Right lobe of liver (tissue), 6 donors: ENCODE measurements at regions of chr15 and their contacts with region 1.

Region 1: GRCh38 chr15:84826369-84826823 is 9.2 kb downstream of the ALPK3 start:
- DNase-seq: peak in 2 of 3 donors; percentile 53 to 69
- ATAC-seq: peak; percentile 53 to 68 (median 62)
- H3K4me3 ChIP-seq: no peak overlapping the region
- H3K27ac ChIP-seq: no peak overlapping the region
- H3K4me1 ChIP-seq: peaks cover 0 to 16% (median 8%) of the 10 kb centered on the region in 4 donors
- H3K27me3 ChIP-seq: no peaks in the 10 kb centered on the region
- CTCF ChIP-seq: peak; percentile 35 to 63 (median 54)
- POLR2A ChIP-seq: no peak

Region 2: GRCh38 chr15:84761607-84762131 is 64.7 kb before region 1 on chr15:
- intact Hi-C with region 1: no loop called
- DNase-seq: no peak
- ATAC-seq: no peak
- H3K4me3 ChIP-seq: no peak overlapping the region
- H3K27ac ChIP-seq: peak overlapping the region in 2 of 3 donors; percentile 86 to 87
- H3K4me1 ChIP-seq: peaks cover 0 to 78% (median 39%) of the 10 kb centered on the region in 4 donors
- H3K27me3 ChIP-seq: no peaks in the 10 kb centered on the region
- CTCF ChIP-seq: no peak
- POLR2A ChIP-seq: no peak

Region 3: DNA sequence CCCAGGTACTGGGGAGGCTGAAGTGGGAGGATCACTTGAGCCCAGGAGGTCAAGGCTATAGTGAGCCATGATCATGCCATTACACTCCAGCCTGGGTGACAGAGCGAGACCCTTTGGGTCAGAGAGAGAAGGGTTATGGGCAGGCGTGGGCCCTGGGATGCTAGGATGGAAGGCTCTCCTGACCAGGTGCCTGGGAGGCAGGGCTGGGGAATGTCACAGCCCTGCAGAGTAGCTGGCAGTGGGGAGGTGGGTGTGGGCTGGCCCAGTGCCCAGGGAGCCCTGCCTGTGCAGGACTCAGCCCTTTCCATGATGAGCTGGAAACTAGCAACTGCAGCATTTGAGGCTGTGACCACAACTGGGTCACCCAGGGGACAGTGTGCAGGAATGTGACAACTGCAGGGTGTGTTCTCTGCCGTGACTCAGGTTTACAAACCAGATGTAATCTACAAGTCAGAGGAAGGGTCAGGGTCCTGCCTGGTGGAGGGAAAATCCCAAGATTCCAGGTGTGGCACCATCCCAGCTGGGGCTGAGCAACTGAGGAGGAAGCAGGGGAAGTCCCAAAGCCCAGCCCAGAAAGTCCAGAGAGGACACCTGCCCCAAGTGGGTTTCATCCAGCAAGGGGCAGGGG is 103.5 kb after region 1 on chr15:
- intact Hi-C with region 1: loop called in 1 of 2 experiments (anchors 10 kb)
- DNase-seq: peak in 2 of 3 donors; percentile 62 to 80
- ATAC-seq: peak in 3 of 4 donors; percentile 14 to 73 (median 18)
- H3K4me3 ChIP-seq: no peak overlapping the region
- H3K27ac ChIP-seq: no peak overlapping the region
- H3K4me1 ChIP-seq: peaks cover 0 to 11% (median 3%) of the 10 kb centered on the region in 4 donors
- H3K27me3 ChIP-seq: no peaks in the 10 kb centered on the region
- CTCF ChIP-seq: no peak
- POLR2A ChIP-seq: no peak